Left ventricle myocardium superior (tissue), 1 donor: ENCODE measurements at regions of chr10 and their contacts with region 1.

Region 1: GRCh38 chr10:75401569-75402485 is at the start of gene ZNF503:
- DNase-seq: peak; percentile 98
- ATAC-seq: peak; percentile 82
- total RNA-seq, gene ZNF503: 6.8 TPM

Region 2: DNA sequence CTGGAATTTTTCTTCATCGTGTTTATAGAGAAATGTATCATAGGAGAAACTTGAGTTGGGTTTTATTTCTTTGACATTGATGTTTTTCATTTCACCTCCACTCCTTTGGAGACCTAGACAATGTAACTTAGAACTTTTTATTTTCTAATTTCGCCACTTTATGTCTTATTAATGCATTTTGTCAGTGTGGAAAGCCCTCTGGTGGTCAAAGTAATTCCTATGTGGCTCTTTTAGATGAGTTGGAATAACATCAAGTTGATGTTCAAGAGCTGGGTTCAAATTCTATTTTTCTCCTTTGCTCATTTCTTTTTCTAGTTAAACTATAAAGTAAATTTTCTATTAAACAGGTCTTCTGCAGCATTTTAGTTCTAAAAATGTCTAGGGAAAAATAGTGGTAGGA is 508.2 kb after region 1 on chr10:
- intact Hi-C with region 1: loop called (anchors 5 kb)
- DNase-seq: no peak
- ATAC-seq: no peak

Region 3: DNA sequence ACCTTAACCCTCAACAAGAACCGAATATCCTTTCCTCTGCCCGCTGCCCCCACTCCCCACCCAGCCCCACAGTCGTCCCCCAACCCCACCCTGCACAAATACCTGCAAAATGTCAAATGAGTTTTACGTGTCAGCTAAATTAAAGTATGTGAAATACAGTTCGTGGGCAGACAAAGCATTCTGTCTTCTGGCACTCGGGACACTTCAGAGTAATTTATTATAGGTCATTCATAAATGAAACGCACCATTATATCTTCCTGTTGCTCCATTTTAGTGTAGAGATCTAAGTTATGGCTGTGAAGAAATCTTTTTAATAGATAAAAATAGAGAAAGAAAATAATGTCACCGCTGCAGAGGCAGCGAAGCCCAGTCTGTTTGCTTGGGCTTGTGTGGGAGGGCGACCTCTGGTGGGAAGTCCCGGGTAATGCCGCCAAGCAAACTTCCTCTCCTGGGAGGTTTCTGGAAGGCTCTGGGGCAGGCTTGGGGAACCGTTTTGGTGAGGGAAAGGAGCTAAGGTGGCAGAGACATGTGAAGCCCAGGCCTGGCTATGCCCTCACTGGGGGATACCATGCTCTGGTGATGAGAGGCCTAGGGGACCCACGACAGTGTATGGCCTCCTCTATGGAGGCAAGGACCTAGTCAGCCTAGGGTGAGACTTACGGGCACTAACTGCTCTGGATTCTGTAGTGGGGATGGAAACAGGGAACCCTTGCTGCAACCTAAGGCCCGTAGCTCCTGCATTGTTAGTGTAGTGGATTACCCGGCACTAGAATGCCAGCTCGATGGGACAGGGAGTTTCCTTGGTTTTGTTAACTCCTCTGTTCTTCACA is 634.5 kb after region 1 on chr10:
- intact Hi-C with region 1: loop called (anchors 10 kb)
- DNase-seq: peak; percentile 77
- ATAC-seq: peak; percentile 93

Region 4: GRCh38 chr10:76303682-76304316 is 902.0 kb after region 1 on chr10:
- intact Hi-C with region 1: loop called (anchors 10 kb)
- DNase-seq: peak; percentile 76
- ATAC-seq: peak; percentile 98